Right ventricle myocardium inferior (tissue), 1 donor: ENCODE measurements at regions of chr11 and their contacts with region 1.

Region 1: DNA sequence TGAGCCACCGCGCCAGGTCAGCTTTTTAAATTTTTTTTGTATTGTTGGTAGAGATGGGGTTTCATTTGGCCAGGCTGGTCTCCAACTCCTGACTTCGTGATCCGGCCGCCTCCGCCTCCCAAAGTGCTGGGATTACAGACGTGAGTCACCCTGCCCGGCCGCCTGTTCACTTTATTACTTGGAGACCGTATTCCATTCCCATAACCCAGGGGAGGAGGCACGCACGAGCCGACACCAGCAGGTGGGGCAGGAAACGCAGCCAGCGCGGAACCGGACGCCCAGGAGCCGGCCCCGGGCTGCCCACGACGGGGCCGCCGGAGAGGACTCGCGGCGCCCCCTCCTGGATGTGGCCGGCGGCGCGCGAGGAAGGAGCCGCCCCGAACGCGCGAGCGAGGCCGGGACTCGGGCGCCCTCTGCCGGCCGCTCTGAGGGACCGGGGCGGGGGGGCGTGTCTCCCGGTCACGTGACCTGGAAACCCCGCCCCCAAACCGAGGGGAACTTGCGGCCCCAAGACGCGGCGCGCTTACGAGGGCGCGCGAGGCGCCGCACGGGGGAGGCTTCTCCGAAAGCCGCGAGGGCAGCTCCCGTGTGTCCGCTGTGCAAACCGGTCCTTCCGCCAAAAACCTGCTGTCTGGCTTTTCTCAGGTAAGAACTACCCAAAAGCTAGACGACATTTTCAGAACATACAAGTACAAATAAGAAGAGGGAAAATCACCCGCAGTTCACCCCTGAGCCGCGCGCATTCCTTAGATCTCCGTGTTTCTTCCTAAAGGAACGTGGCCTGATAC is 11.6 kb upstream of the RNH1 start:
- DNase-seq: peak; percentile 94
- ATAC-seq: peak; percentile 98

Region 2: DNA sequence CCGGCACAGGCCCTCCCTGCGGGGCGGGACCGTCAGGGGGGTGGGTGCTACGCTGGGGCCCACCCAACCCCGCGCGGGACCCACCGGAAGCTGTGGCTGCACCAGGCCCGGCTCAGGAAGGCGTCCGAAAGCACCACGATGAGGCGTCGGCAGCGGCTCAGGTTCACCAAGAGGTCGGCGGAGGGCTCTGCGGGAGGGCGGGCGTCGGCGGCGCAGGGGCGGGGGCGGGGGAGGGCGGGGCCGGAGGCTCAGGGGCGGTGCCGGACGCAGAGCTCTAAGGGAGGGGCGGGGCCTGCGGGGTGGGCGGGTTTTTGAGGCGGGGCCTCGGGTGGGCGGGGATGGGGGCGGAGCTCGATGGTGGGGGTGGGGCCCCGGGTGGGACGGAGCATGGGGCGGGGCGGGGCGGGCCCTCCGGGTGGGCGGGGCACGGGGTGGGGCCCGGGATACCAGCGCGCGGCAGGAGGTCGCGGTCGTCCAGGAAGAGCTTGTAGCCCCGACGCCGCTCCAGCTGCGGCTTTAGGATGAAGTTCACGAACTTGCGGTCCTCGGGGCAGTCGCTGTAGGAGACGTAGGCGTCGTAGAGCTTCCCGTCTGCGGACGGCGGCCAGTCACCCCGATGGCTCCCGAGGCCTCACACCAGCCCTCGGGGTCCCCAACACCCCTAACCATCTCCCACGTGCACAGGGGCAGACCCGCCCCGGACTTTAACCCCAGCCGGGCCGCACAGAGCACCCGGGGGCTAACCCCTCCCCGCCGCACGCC is 111.5 kb before region 1 on chr11:
- intact Hi-C with region 1: loop called (anchors 5 kb)
- DNase-seq: peak; percentile 92
- ATAC-seq: peak; percentile 71

Region 3: DNA sequence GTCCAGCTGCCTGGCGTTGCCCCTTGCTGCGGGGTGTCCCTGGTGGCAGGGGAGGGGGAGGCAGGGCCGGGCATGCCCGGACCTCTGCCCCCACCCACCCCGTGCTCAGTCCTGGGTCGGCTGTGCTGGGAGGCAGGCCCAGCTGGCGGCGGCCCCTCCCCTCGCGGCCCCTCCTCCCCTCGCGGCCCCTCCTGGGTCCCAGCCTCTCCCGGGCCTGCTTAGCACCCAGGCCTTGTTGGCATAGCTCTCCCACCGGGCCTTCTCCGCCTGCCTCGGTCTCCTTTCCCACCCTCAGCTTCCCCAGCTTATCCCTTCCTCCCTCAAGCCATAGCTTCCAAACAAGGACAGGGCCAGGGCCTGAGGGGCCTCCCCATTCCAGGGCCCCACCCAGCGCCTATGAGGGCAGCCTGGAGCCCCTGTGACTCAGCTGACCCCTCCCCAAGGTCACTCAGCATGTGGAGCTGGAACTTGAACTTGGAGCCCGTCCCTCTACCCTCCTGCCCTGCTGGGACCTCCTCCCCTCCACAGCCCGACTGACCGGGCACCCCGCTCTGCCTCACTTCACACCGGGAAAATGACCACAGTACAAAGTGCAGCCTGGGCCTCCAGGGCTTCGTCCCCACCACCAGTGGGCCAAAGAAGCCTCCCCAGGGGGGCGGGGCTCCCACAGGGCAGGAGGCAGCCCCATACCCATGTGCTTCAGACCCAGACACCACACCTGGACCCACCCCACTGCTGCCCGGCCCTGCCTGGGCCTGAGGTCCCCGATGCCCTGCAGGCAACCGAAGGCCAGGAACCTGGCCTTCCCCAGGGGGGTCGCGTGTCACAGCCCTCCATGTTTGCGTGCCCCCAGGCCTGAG is 188.5 kb after region 1 on chr11:
- intact Hi-C with region 1: no loop called
- DNase-seq: no peak
- ATAC-seq: peak; percentile 26